Activated CD4-positive, alpha-beta T cell treated with anti-CD3 and anti-CD28 coated beads for 36 hours (primary cell): ENCODE measurements at regions of chr3 and their contacts with region 1.

Region 1: GRCh38 chr3:15268033-15268631 is 62.1 kb downstream of the CAPN7 start:
- DNase-seq: peak; percentile 93
- ATAC-seq: peak; percentile 55
- H3K4me3 Mint-ChIP-seq: no peak overlapping the region
- H3K27ac Mint-ChIP-seq: no peak overlapping the region
- H3K4me1 Mint-ChIP-seq: peaks cover 57% of the 10 kb centered on the region
- H3K27me3 Mint-ChIP-seq: peaks cover 5% of the 10 kb centered on the region

Region 2: GRCh38 chr3:15051531-15051930 is 216.6 kb before region 1 on chr3:
- CTCF ChIA-PET with region 1: no interaction called
- POLR2A ChIA-PET with region 1: no interaction called
- intact Hi-C with region 1: no loop called
- DNase-seq: peak; percentile 67
- ATAC-seq: peak; percentile 81
- H3K4me3 Mint-ChIP-seq: no peak overlapping the region
- H3K27ac Mint-ChIP-seq: peak overlapping the region; percentile 9
- H3K4me1 Mint-ChIP-seq: peaks cover 30% of the 10 kb centered on the region
- H3K27me3 Mint-ChIP-seq: no peaks in the 10 kb centered on the region

Region 3: GRCh38 chr3:15205934-15206661 is 62.0 kb before region 1 on chr3 and contains the start of gene CAPN7:
- CTCF ChIA-PET with region 1: interaction called, 19 read pairs
- POLR2A ChIA-PET with region 1: interaction called, 5 read pairs
- intact Hi-C with region 1: loop called in 1 of 2 experiments (anchors 1 kb)
- DNase-seq: peak; percentile 94
- ATAC-seq: peak; percentile 86
- H3K4me3 Mint-ChIP-seq: peak within 1 kb of the TSS; percentile 85
- H3K27ac Mint-ChIP-seq: peak within 1 kb of the TSS; percentile 93
- H3K4me1 Mint-ChIP-seq: peaks cover 23% of the 10 kb centered on the region
- H3K27me3 Mint-ChIP-seq: no peaks in the 10 kb centered on the region
- total RNA-seq, gene CAPN7: 18.4 to 20.4 TPM

Region 4: DNA sequence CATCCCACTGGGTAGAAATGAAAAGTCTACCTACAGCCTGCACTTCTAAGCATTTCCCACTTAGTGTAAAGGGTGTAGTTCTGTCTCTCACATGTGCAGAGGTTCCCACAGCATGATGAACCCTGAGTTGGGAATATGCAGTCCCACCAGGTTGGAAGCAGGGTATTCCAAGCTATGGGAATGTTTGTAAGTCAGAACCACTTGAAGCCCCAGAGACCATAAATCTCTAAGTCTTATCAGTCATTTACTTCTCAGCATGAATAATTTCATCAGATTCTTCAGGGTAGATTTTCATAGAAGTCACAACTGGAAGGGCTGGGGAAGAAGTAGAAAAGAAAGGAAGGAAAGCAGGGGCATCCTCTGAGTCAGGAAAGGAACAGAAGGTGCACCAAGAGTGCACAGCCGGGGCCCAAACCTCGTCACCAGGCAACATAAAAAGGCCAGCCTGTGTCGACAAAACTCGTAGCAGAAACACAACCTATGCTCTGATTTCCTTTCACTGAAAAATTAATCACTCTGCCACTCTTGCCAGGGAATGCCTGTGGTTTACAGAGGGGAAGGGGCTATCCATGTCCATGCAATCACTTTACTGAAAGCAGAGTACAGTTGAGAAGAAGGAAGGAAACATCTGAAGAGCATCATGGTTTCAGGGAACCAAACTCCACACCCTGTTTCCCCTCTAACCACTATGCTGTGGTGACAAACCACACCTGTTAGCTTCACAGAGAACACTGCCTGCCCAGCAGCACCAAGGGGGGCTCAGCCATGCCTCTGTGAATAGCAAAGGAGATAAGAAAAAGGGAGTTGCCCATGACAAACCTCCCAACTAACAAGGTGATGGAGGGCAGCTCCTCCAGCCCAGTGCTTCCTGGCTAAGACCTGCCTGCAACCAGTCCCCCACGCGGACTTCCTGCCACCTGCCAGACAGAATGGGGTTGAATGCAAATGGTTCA is 23.7 kb after region 1 on chr3:
- CTCF ChIA-PET with region 1: interaction called, 15 read pairs
- POLR2A ChIA-PET with region 1: interaction called, 3 read pairs
- intact Hi-C with region 1: loop called (anchors 1 to 2 kb)
- DNase-seq: peak; percentile 77
- ATAC-seq: peak; percentile 82
- H3K4me3 Mint-ChIP-seq: no peak overlapping the region
- H3K27ac Mint-ChIP-seq: peak overlapping the region; percentile 70
- H3K4me1 Mint-ChIP-seq: peaks cover 68% of the 10 kb centered on the region
- H3K27me3 Mint-ChIP-seq: no peaks in the 10 kb centered on the region

Region 5: GRCh38 chr3:15332405-15333098 is 64.4 kb after region 1 on chr3 and contains the start of gene SH3BP5:
- CTCF ChIA-PET with region 1: interaction called, 132 read pairs
- POLR2A ChIA-PET with region 1: interaction called, 7 read pairs
- intact Hi-C with region 1: loop called (anchors 1 kb)
- DNase-seq: peak; percentile 86
- ATAC-seq: peak; percentile 89
- H3K4me3 Mint-ChIP-seq: peak within 1 kb of the TSS; percentile 85
- H3K27ac Mint-ChIP-seq: peak within 1 kb of the TSS; percentile 83
- H3K4me1 Mint-ChIP-seq: peaks cover 53% of the 10 kb centered on the region
- H3K27me3 Mint-ChIP-seq: peaks cover 2% of the 10 kb centered on the region
- total RNA-seq, gene SH3BP5: 8.9 to 9.4 TPM

Region 6: DNA sequence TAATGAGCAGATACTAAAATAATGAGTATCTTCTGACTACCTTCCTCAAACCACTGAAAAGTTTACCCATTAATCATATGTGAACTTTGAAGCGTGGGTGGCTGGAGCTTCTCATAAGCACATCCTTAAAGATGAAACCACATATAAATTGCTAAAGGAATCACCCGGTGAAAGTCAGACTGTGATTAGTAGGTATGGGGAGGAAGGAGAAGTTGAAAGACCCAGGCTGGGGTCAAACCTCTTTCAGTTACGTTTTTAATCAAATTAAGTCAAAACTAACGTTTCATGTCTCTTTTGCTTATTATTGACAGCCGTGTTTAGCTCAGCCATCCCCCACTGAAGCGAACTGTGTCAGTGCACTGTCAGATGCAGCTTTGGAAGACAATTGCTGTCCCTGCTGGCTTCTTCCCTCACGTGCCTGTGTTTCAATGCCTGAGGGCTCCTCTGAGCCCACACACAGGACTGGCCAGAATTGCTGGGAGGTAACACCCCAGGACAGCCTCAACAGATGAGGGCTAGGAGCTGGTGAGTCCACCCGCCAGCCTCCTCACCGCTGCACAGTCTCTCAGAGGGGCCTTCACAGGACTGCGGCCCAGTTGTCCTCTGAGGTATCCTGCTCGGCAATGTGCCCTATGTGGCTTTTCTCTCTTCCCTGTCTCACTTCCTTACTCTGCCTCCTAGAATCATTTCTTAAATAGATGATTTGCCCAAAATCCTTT is 93.5 kb after region 1 on chr3:
- CTCF ChIA-PET with region 1: interaction called, 35 read pairs
- POLR2A ChIA-PET with region 1: interaction called, 8 read pairs
- intact Hi-C with region 1: loop called (anchors 1 kb)
- DNase-seq: peak; percentile 83
- ATAC-seq: peak; percentile 76
- H3K4me3 Mint-ChIP-seq: peak overlapping the region; percentile 53
- H3K27ac Mint-ChIP-seq: peak overlapping the region; percentile 87
- H3K4me1 Mint-ChIP-seq: peaks cover 38% of the 10 kb centered on the region
- H3K27me3 Mint-ChIP-seq: peaks cover 2% of the 10 kb centered on the region

Region 7: DNA sequence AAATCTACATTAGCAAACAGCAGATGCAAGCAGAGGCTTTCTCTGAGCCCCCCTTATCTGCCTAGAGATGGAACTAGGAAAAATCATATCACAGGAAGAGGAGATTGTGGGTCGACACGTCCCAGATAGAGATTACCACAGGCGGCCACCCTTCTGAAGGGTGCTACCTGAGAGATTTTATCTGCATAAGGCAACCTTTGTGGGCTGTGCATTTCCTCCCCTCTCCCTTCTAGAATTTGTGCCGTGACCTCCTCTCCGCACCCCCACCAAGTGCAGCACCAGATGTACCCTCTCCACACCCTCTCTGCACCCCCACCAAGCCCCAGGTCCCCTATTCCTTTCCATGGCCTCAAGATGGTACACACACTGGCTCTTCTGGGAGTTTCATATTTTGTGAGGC is 131.8 kb after region 1 on chr3:
- CTCF ChIA-PET with region 1: interaction called, 120 read pairs
- POLR2A ChIA-PET with region 1: interaction called, 3 read pairs
- intact Hi-C with region 1: loop called (anchors 1 to 2 kb)
- DNase-seq: no peak
- ATAC-seq: no peak
- H3K4me3 Mint-ChIP-seq: no peak overlapping the region
- H3K27ac Mint-ChIP-seq: no peak overlapping the region
- H3K4me1 Mint-ChIP-seq: peaks cover 14% of the 10 kb centered on the region
- H3K27me3 Mint-ChIP-seq: no peaks in the 10 kb centered on the region

Region 8: DNA sequence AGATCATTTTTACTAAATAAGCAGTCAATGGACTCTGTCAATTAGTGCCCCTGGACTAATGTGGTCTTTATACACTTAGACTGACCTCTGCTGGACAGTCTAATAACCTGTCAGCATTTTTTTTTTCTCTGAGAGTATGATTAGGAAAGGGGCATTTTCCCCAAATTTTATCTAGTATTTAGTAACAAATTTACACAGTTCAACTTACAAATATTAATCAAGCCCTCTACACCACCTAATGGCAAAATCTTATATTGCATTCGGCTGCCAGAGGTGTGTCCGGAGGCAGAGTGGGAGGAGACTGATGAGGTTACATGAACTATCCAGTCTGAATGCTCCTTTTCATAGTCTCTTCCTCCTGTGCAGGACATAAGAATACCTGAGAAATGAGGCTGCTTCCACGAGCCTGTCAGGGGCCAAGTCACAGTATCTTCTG is 289.4 kb after region 1 on chr3:
- CTCF ChIA-PET with region 1: interaction called, 12 read pairs
- POLR2A ChIA-PET with region 1: no interaction called
- intact Hi-C with region 1: loop called (anchors 2 to 10 kb)
- DNase-seq: peak; percentile 75
- ATAC-seq: peak; percentile 87
- H3K4me3 Mint-ChIP-seq: no peak overlapping the region
- H3K27ac Mint-ChIP-seq: no peak overlapping the region
- H3K4me1 Mint-ChIP-seq: peaks cover 10% of the 10 kb centered on the region
- H3K27me3 Mint-ChIP-seq: no peaks in the 10 kb centered on the region